Activated CD4-positive, alpha-beta T cell treated with anti-CD3 and anti-CD28 coated beads for 36 hours (primary cell): ENCODE measurements at regions of chr5 and their contacts with region 1.

Region 1: DNA sequence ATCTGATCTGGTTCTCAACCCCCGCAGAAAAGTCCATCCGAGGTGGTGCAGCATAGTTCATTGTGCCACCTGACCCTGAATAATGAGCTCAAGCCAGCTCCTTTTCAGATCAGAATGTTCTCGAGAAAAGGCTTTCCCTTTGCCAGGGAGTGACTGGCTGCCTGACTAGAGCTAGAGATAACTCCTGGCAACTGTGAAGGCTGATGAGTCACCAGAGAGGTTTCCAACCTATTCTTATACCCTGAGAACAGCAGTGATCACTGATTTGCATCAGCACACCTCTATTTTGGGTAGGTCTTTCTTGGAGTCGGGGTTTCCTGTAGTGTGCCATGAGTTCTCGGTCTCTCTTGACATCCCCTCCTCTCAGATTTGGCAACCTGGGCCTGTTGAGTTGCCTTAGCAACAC is 127.9 kb downstream of the PIK3R1 start:
- DNase-seq: peak; percentile 56
- ATAC-seq: peak; percentile 88
- H3K4me3 Mint-ChIP-seq: no peak overlapping the region
- H3K27ac Mint-ChIP-seq: no peak overlapping the region
- H3K4me1 Mint-ChIP-seq: peaks cover 26% of the 10 kb centered on the region
- H3K27me3 Mint-ChIP-seq: no peaks in the 10 kb centered on the region

Region 2: GRCh38 chr5:68369457-68370125 is 26.2 kb after region 1 on chr5:
- CTCF ChIA-PET with region 1: no interaction called
- POLR2A ChIA-PET with region 1: no interaction called
- intact Hi-C with region 1: loop called in 1 of 2 experiments (anchors 1 kb)
- DNase-seq: peak; percentile 72
- ATAC-seq: peak; percentile 88
- H3K4me3 Mint-ChIP-seq: peak overlapping the region; percentile 24
- H3K27ac Mint-ChIP-seq: peak overlapping the region; percentile 16
- H3K4me1 Mint-ChIP-seq: peaks cover 36% of the 10 kb centered on the region
- H3K27me3 Mint-ChIP-seq: no peaks in the 10 kb centered on the region

Region 3: GRCh38 chr5:68424799-68425537 is 81.5 kb after region 1 on chr5:
- CTCF ChIA-PET with region 1: no interaction called
- POLR2A ChIA-PET with region 1: no interaction called
- intact Hi-C with region 1: loop called (anchors 2 to 10 kb)
- DNase-seq: peak; percentile 48
- ATAC-seq: peak; percentile 91
- H3K4me3 Mint-ChIP-seq: no peak overlapping the region
- H3K27ac Mint-ChIP-seq: no peak overlapping the region
- H3K4me1 Mint-ChIP-seq: peaks cover 48% of the 10 kb centered on the region
- H3K27me3 Mint-ChIP-seq: peaks cover 10% of the 10 kb centered on the region

Region 4: GRCh38 chr5:68534131-68534940 is 190.9 kb after region 1 on chr5:
- CTCF ChIA-PET with region 1: no interaction called
- POLR2A ChIA-PET with region 1: no interaction called
- intact Hi-C with region 1: no loop called
- DNase-seq: no peak
- ATAC-seq: no peak
- H3K4me3 Mint-ChIP-seq: no peak overlapping the region
- H3K27ac Mint-ChIP-seq: no peak overlapping the region
- H3K4me1 Mint-ChIP-seq: no peaks in the 10 kb centered on the region
- H3K27me3 Mint-ChIP-seq: peaks cover 17% of the 10 kb centered on the region